GM10248 (cell line): ENCODE measurements at regions of chr6 and their contacts with region 1.

Region 1: GRCh38 chr6:114170958-114171387 is 171.8 kb downstream of the HS3ST5 start:
- DNase-seq: no peak
- CTCF ChIP-seq: no peak

Region 2: DNA sequence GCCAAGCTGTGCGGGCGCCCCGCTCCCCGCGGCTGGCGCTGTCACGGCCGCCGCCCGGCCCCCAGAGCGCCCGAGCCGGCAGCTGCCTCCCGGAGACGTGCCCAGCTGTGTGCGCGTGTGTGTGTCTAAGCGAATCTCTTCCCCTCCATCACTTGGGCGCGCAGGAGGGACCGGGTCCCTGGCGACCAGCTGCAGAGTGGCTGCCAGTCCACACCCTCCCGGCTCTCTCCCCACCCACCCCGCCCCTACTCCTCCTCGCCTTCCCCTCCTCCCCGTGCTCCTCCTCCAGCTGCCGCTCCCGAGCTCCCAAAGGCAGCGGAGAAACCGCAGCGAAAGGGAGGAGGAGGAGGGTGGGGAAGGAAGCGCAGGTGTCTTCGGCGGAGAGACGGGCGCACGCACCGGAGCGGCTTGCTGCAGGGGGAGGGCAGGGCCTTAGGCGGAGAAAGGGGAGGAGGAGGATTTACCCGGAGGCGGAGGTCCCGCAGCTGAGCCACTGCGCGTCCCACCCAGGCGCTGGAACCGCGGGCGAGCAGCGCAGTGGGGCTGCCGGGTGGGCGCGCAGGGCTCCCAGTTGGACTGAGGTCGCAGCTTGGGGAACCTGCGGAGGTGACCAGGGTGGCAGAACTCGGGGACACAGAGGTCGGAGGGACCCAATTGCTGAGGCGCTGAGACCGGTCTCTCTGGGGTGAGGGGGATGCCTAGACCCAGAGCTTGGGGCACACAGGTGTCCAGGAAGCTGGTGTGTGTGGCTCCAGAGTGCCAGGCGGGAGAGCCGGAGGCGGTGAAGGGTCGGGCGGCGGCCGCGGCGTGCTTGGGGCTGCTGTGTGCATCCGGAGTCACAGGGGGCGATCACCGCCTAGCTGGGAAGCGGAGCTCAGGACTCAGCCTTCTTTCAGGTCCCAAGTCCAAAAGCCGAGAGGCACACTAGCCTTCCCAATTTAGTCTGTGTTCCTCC is 172.1 kb after region 1 on chr6 and contains the start of gene HS3ST5:
- CTCF ChIA-PET with region 1: no interaction called
- POLR2A ChIA-PET with region 1: interaction called, 12 read pairs
- DNase-seq: peak; percentile 24
- CTCF ChIP-seq: peak; percentile 10

Region 3: DNA sequence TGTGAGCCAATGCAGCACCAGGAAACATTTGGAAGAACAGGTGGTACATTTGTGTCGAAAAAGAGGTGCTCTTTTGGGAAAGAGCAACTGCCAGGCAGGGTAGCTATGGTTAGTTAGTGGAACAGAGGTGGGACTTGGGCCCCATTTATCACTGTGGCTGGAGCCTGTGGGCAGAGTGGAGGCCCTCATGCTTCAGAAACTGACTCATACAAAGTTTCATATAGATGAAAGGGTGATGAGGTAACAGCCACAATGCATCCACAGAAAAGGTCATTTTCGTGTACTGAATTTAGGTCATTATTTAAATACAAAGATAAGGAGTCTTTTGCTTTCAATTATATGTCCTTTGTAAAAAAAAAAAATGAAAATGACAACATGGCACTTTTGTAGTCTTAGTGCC is 248.2 kb after region 1 on chr6:
- CTCF ChIA-PET with region 1: no interaction called
- POLR2A ChIA-PET with region 1: no interaction called
- DNase-seq: peak; percentile 10
- CTCF ChIP-seq: no peak